ENCODE measurements at regions of chr10 and their contacts with region 1.

Region 1: DNA sequence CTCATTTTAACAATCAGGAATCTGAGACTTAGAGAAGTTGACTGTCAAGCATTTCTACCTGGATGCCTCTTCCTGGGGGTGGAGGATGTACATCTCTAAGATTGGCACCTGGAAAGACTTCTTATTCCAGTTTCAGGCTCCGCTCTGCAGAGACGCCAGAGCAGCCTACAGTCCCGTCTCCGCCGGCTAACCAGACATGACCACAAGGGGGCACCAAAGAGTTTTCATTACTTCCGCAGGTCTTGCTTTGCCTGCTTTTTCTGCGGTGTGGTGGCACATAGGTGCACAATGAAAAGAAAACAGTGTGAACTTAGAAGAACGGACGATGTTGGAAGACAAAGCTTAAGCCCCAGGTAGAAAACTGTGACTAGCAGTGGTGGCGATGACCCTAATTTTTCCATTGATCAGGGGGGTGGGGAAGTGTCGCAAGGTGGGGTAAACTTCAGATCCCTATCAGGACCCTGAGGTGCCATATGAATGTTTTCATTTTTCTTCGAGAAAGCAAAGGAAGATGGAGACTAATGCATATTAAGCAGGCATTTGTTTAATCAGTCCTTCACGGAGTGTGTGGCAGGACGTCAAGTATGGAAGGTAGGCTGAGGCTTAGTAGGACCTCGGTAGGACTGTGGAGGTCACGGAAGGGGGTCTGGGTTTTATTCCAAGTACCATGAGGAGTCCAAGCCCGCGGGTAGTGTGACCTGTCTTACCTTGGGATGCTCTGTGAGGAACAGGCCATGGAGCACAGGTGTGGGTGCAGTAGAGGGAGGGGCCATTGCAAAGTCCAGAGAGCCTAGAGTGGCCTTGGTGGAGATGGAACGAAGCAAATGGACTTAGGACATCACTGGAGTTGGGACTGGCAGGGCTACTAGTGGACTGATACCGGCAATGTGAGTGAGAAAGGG is 60.1 kb upstream of the SORCS3 start:
- DNase-seq: peak; percentile 77
- H3K4me3 Mint-ChIP-seq: no peak overlapping the region
- H3K27ac Mint-ChIP-seq: no peak overlapping the region
- H3K4me1 Mint-ChIP-seq: no peaks in the 10 kb centered on the region
- H3K27me3 Mint-ChIP-seq: peaks cover 100% of the 10 kb centered on the region
- CTCF ChIP-seq: peak; percentile 59

Region 2: GRCh38 chr10:104622598-104623209 is 41.7 kb after region 1 on chr10:
- CTCF ChIA-PET with region 1: interaction called, 3 read pairs
- intact Hi-C with region 1: loop called (anchors 2 kb)
- DNase-seq: peak; percentile 39
- H3K4me3 Mint-ChIP-seq: no peak overlapping the region
- H3K27ac Mint-ChIP-seq: no peak overlapping the region
- H3K4me1 Mint-ChIP-seq: no peaks in the 10 kb centered on the region
- H3K27me3 Mint-ChIP-seq: peaks cover 61% of the 10 kb centered on the region
- CTCF ChIP-seq: no peak

Region 3: GRCh38 chr10:104657457-104657856 is 76.4 kb after region 1 on chr10:
- CTCF ChIA-PET with region 1: no interaction called
- intact Hi-C with region 1: no loop called
- DNase-seq: no peak
- H3K4me3 Mint-ChIP-seq: no peak overlapping the region
- H3K27ac Mint-ChIP-seq: no peak overlapping the region
- H3K4me1 Mint-ChIP-seq: no peaks in the 10 kb centered on the region
- H3K27me3 Mint-ChIP-seq: peaks cover 54% of the 10 kb centered on the region
- CTCF ChIP-seq: no peak